Heart right ventricle (tissue), 16 donors: ENCODE measurements at regions of chr9 and their contacts with region 1.

Region 1: DNA sequence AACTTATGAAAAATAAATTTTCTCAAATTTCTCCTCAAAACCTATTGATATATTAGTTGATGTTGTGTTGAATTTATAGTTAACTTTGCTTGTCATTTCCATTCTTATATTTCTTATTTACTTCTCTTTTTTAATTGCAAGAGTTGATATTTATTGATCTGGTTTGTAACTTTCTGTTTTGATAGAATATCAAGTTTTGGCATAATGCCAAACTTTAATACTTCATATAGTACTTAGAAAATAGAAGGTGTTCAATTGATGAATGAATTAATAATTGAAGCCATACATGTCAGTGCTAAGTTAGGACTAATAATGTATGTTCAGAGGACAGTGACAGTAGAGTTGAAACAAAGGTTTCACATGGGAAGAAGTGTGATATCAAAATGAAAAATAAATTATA is 27.9 kb downstream of the ERCC6L2 start:
- DNase-seq: no peak
- ATAC-seq: no peak
- H3K4me3 ChIP-seq: no peak overlapping the region
- H3K27ac ChIP-seq: no peak overlapping the region
- H3K4me1 ChIP-seq: peaks cover 0 to 6% (median 0%) of the 10 kb centered on the region in 9 donors
- H3K27me3 ChIP-seq: no peaks in the 10 kb centered on the region
- CTCF ChIP-seq: no peak

Region 2: GRCh38 chr9:95887926-95888497 is 15.4 kb before region 1 on chr9:
- intact Hi-C with region 1: loop called in 1 of 10 experiments (anchors 1 kb)
- DNase-seq: no peak
- ATAC-seq: no peak
- H3K4me3 ChIP-seq: no peak overlapping the region
- H3K27ac ChIP-seq: no peak overlapping the region
- H3K4me1 ChIP-seq: peaks cover 0 to 4% (median 0%) of the 10 kb centered on the region in 9 donors
- H3K27me3 ChIP-seq: no peaks in the 10 kb centered on the region
- CTCF ChIP-seq: no peak